Naive thymus-derived CD4-positive, alpha-beta T cell (primary cell): ENCODE measurements at regions of chr22 and their contacts with region 1.

Region 1: GRCh38 chr22:44129619-44129976 is 51.1 kb upstream of the PARVG start:
- DNase-seq: no peak
- ATAC-seq: no peak
- H3K4me3 ChIP-seq: no peak overlapping the region
- H3K4me3 Mint-ChIP-seq: no peak overlapping the region
- H3K27ac ChIP-seq: no peak overlapping the region
- H3K27ac Mint-ChIP-seq: no peak overlapping the region
- H3K4me1 ChIP-seq: no peaks in the 10 kb centered on the region
- H3K4me1 Mint-ChIP-seq: peaks cover 0 to 27% (median 3%) of the 10 kb centered on the region in 7 donors
- H3K27me3 ChIP-seq: no peaks in the 10 kb centered on the region
- H3K27me3 Mint-ChIP-seq: peaks cover 0 to 24% (median 8%) of the 10 kb centered on the region in 5 donors

Region 2: GRCh38 chr22:44151676-44152075 is 22.1 kb after region 1 on chr22:
- CTCF ChIA-PET with region 1: no interaction called
- POLR2A ChIA-PET with region 1: no interaction called
- intact Hi-C with region 1: loop called in 1 of 2 experiments (anchors 1 kb)
- DNase-seq: no peak
- ATAC-seq: no peak
- H3K4me3 ChIP-seq: no peak overlapping the region
- H3K4me3 Mint-ChIP-seq: no peak overlapping the region
- H3K27ac ChIP-seq: no peak overlapping the region
- H3K27ac Mint-ChIP-seq: no peak overlapping the region
- H3K4me1 ChIP-seq: no peaks in the 10 kb centered on the region
- H3K4me1 Mint-ChIP-seq: peaks cover 0 to 4% (median 0%) of the 10 kb centered on the region in 7 donors
- H3K27me3 ChIP-seq: no peaks in the 10 kb centered on the region
- H3K27me3 Mint-ChIP-seq: peaks cover 0 to 4% (median 0%) of the 10 kb centered on the region in 5 donors

Region 3: DNA sequence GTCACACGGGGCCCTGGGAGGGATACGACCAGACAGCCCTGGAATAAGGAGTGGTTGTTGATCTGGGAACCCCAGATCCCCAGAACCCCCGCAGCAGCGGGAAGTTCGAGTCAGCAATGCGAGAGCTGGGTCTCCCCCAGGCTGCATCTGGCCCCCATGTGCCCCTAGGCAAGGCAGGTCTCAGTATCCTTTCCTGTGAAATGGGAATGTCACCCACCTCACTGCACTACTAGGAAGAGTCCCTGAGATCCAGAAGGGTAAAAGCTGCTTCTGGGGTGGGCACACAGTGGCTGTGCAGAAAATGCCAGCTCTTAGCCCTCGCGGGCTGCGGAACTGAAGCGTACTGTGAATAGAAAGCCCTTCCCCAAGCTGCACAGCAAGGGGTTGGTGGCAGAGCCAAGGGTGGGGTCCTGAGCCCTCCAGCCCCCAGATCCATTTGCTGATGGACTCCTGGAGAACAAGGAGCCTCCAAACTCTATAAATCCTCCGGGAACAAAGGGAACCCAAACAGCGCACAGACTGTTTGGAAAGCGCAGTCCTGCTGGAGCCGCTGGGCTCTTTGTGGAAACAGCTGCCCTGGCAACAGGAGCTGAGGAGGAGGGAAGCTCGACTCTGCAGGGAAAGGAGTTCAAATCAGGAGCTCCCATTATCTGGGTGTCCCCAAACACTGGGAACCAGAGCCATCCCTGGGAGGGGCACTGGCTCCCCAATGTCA is 251.3 kb after region 1 on chr22:
- CTCF ChIA-PET with region 1: no interaction called
- POLR2A ChIA-PET with region 1: no interaction called
- intact Hi-C with region 1: no loop called
- DNase-seq: no peak
- ATAC-seq: no peak
- H3K4me3 ChIP-seq: no peak overlapping the region
- H3K4me3 Mint-ChIP-seq: no peak overlapping the region
- H3K27ac ChIP-seq: no peak overlapping the region
- H3K27ac Mint-ChIP-seq: no peak overlapping the region
- H3K4me1 ChIP-seq: no peaks in the 10 kb centered on the region
- H3K4me1 Mint-ChIP-seq: no peaks in the 10 kb centered on the region
- H3K27me3 ChIP-seq: no peaks in the 10 kb centered on the region
- H3K27me3 Mint-ChIP-seq: peaks cover 0 to 23% (median 11%) of the 10 kb centered on the region in 5 donors